Calu3 (cell line): ENCODE measurements at regions of chr5 and their contacts with region 1.

Region 1: GRCh38 chr5:147628058-147628895 is 118.4 kb upstream of the DPYSL3 start:
- DNase-seq: peak; percentile 81
- H3K4me3 Mint-ChIP-seq: no peak overlapping the region
- H3K27ac Mint-ChIP-seq: no peak overlapping the region
- H3K4me1 Mint-ChIP-seq: no peaks in the 10 kb centered on the region
- H3K27me3 Mint-ChIP-seq: peaks cover 8% of the 10 kb centered on the region
- CTCF ChIP-seq: peak; percentile 81

Region 2: DNA sequence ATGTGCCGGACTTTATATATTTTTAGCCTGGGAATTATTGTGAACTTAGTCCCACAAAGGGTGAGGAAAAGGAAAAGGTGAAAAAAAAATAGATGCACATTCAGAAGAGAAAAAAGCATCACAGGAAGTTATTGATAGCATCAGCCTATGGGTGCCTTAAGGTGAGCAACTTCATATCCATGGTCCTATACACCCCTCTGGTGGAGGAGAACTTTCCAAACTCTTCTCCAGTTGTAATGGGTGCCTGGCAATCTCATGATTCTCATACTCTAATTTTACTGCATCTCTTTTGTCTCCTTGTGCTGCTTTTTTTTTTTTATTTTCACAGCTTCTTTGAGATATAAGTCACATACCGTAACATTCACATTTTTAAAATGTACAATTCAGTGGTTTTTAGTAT is 46.9 kb after region 1 on chr5:
- CTCF ChIA-PET with region 1: no interaction called
- intact Hi-C with region 1: loop called (anchors 5 kb)
- DNase-seq: no peak
- H3K4me3 Mint-ChIP-seq: no peak overlapping the region
- H3K27ac Mint-ChIP-seq: no peak overlapping the region
- H3K4me1 Mint-ChIP-seq: no peaks in the 10 kb centered on the region
- H3K27me3 Mint-ChIP-seq: no peaks in the 10 kb centered on the region
- CTCF ChIP-seq: no peak

Region 3: DNA sequence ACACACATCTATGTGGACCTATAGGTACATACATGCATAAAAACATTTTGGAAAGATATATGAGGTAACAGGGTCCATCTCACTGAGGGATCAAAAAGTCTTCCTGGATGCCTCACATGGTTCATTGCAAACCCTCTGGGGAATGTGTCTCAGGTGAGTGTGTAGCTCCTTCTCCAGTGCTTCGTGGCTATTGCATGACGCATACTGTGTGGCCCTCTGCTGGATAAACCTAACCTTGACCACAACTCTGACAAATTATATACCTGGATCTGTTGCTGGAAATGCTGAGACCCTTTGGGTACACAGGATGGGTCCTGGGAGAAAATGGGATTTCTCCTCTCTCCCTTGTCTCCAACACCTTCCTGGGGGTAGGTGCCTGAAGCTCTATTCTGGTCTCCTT is 62.3 kb after region 1 on chr5:
- CTCF ChIA-PET with region 1: interaction called, 22 read pairs
- intact Hi-C with region 1: loop called (anchors 1 kb)
- DNase-seq: peak; percentile 55
- H3K4me3 Mint-ChIP-seq: no peak overlapping the region
- H3K27ac Mint-ChIP-seq: no peak overlapping the region
- H3K4me1 Mint-ChIP-seq: no peaks in the 10 kb centered on the region
- H3K27me3 Mint-ChIP-seq: no peaks in the 10 kb centered on the region
- CTCF ChIP-seq: peak; percentile 69

Region 4: DNA sequence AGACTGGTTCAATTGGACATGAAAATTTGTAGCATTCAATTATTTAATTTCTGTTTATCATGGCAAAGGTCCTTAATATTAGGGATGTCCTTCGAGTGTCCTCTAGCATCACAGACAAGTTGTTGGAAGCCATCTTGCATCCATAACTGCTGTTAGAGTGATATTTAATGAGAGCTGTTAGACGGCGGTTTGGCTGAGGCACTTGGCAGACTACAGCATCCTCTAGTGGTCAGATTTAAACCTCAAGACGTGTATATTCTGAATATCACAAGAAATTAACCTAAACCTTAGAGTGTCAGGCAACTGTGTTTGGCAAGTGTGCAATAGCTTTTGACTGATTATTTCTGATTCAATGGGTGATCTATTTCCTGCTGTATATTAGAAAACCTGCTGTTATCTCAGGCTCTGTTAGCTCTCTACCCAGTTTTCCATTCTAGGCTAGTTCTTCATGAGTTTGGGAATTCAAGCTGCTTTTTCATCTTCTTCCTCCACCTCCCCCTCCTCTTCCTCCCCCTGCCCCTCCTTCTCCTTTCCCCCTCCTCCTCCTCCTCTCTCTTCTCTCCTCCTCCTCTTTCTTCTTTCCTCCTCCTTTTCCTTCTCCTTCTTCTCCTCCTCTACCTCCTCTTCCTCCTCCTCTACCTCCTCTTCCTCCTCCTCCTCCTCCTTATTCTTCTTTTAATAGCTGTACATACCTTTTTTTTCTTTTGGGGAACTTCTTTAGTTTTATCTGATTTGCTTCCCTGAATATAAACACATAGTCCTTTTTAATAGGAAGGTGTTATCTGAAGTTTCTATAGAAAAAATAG is 194.6 kb after region 1 on chr5:
- CTCF ChIA-PET with region 1: interaction called, 38 read pairs
- intact Hi-C with region 1: loop called (anchors 1 kb)
- DNase-seq: peak; percentile 45
- H3K4me3 Mint-ChIP-seq: no peak overlapping the region
- H3K27ac Mint-ChIP-seq: peak overlapping the region; percentile 16
- H3K4me1 Mint-ChIP-seq: peaks cover 18% of the 10 kb centered on the region
- H3K27me3 Mint-ChIP-seq: no peaks in the 10 kb centered on the region
- CTCF ChIP-seq: peak; percentile 85

Region 5: GRCh38 chr5:147857302-147858129 is 229.2 kb after region 1 on chr5:
- CTCF ChIA-PET with region 1: interaction called, 7 read pairs
- intact Hi-C with region 1: loop called (anchors 1 kb)
- DNase-seq: peak; percentile 76
- H3K4me3 Mint-ChIP-seq: no peak overlapping the region
- H3K27ac Mint-ChIP-seq: no peak overlapping the region
- H3K4me1 Mint-ChIP-seq: peaks cover 57% of the 10 kb centered on the region
- H3K27me3 Mint-ChIP-seq: no peaks in the 10 kb centered on the region
- CTCF ChIP-seq: peak; percentile 70

Region 6: DNA sequence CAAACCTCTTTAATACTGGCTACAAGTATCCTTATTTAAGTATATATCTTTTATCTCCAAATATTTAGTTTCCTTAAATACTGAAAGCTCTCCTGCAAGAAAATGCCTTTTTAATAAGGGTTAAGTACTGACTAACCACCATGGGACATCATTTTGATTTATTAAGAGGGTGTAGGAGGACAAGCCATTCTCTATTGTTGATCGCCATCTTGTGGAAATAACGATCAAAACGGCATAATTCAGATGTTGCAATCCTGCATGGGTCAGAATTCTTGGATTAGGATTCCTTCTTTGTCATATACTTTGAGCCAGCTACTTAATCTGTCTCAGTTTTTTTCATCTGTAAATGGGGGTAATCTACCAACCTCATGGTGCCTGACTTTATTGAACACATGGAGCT is 306.8 kb after region 1 on chr5:
- CTCF ChIA-PET with region 1: interaction called, 9 read pairs
- intact Hi-C with region 1: loop called (anchors 1 kb)
- DNase-seq: peak; percentile 58
- H3K4me3 Mint-ChIP-seq: no peak overlapping the region
- H3K27ac Mint-ChIP-seq: no peak overlapping the region
- H3K4me1 Mint-ChIP-seq: no peaks in the 10 kb centered on the region
- H3K27me3 Mint-ChIP-seq: no peaks in the 10 kb centered on the region
- CTCF ChIP-seq: peak; percentile 66

Region 7: DNA sequence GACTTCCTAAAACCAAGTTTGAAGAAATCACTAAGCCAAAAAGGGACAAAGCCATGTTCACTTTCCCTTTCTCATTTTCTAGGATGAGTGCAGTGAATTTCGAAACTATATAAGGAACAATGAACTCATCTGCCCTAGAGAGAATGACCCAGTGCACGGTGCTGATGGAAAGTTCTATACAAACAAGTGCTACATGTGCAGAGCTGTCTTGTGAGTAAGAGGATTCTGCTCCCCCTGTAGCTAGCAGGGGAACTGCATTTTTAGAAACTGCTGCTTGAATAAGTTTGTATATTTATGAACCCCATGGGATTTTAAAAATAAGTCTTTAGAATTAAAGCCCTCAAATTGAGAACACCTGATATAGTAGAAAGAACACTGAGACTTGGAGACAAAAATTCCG is 497.4 kb after region 1 on chr5:
- CTCF ChIA-PET with region 1: no interaction called
- intact Hi-C with region 1: loop called (anchors 10 kb)
- DNase-seq: no peak
- H3K4me3 Mint-ChIP-seq: no peak overlapping the region
- H3K27ac Mint-ChIP-seq: no peak overlapping the region
- H3K4me1 Mint-ChIP-seq: peaks cover 4% of the 10 kb centered on the region
- H3K27me3 Mint-ChIP-seq: no peaks in the 10 kb centered on the region
- CTCF ChIP-seq: peak; percentile 52